PC-9 (cell line): ENCODE measurements at regions of chr6 and their contacts with region 1.

Region 1: GRCh38 chr6:106702451-106703110 is 73.2 kb downstream of the QRSL1 start:
- DNase-seq: no peak
- H3K4me3 ChIP-seq: no peak overlapping the region
- H3K27ac ChIP-seq: no peak overlapping the region
- H3K4me1 ChIP-seq: no peaks in the 10 kb centered on the region
- H3K27me3 ChIP-seq: no peaks in the 10 kb centered on the region
- CTCF ChIP-seq: no peak

Region 2: DNA sequence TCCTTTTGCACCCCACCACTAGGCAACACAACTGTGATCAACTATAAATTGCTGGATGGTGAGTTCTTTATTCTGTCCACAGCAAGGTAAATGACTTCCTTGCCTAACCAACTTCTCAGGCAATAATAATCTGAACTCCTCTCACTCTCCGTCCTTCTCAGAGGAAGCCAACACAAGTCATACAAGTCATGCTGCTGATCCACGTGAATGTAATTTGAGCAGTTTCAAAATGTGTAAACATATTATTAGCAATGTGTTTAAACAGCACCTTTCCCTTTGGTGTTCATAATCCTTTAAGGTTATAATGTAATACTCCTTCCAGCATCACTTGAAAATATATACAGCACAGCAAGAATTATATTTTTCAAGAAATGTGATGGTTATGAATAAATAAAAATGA is 54.7 kb after region 1 on chr6:
- CTCF ChIA-PET with region 1: no interaction called
- POLR2A ChIA-PET with region 1: interaction called, 10 read pairs
- intact Hi-C with region 1: no loop called
- DNase-seq: no peak
- H3K4me3 ChIP-seq: no peak overlapping the region
- H3K27ac ChIP-seq: no peak overlapping the region
- H3K4me1 ChIP-seq: peaks cover 5% of the 10 kb centered on the region; the same call in 1 of the 2 replicates
- H3K27me3 ChIP-seq: no peaks in the 10 kb centered on the region
- CTCF ChIP-seq: no peak